ENCODE measurements at regions of chr5 and their contacts with region 1.

Region 1: GRCh38 chr5:139633295-139634027 is 14.7 kb upstream of the CXXC5 start:
- DNase-seq: peak; percentile 39 to 62
- ATAC-seq: peak; percentile 13 to 27
- H3K4me3 ChIP-seq: no peak overlapping the region
- H3K27ac ChIP-seq: no peak overlapping the region
- H3K4me1 ChIP-seq: peaks cover 19 to 30% of the 10 kb centered on the region in 2 donors
- H3K27me3 ChIP-seq: no peaks in the 10 kb centered on the region
- CTCF ChIP-seq: peak; percentile 95 to 99 (median 98)
- POLR2A ChIP-seq: no peak

Region 2: GRCh38 chr5:139417214-139417613 is 216.2 kb before region 1 on chr5:
- in situ Hi-C with region 1: no loop called
- intact Hi-C with region 1: loop called (anchors 5 kb)
- DNase-seq: peak; percentile 64 to 79
- ATAC-seq: peak; percentile 69 to 79
- H3K4me3 ChIP-seq: no peak overlapping the region
- H3K27ac ChIP-seq: peak overlapping the region; percentile 83 to 90 (median 87)
- H3K4me1 ChIP-seq: peaks cover 58 to 61% of the 10 kb centered on the region in 2 donors
- H3K27me3 ChIP-seq: no peaks in the 10 kb centered on the region
- CTCF ChIP-seq: no peak
- POLR2A ChIP-seq: no peak

Region 3: GRCh38 chr5:139651853-139652787 is 18.7 kb after region 1 on chr5:
- in situ Hi-C with region 1: no loop called
- intact Hi-C with region 1: loop called (anchors 1 kb)
- DNase-seq: peak; percentile 83 to 92
- ATAC-seq: peak; percentile 35 to 56
- H3K4me3 ChIP-seq: peak overlapping the region; percentile 27 to 77 (median 36)
- H3K27ac ChIP-seq: peak overlapping the region; percentile 97 to 99 (median 98)
- H3K4me1 ChIP-seq: peaks cover 69 to 70% of the 10 kb centered on the region in 2 donors
- H3K27me3 ChIP-seq: no peaks in the 10 kb centered on the region
- CTCF ChIP-seq: no peak
- POLR2A ChIP-seq: peak; percentile 53 to 87

Region 4: DNA sequence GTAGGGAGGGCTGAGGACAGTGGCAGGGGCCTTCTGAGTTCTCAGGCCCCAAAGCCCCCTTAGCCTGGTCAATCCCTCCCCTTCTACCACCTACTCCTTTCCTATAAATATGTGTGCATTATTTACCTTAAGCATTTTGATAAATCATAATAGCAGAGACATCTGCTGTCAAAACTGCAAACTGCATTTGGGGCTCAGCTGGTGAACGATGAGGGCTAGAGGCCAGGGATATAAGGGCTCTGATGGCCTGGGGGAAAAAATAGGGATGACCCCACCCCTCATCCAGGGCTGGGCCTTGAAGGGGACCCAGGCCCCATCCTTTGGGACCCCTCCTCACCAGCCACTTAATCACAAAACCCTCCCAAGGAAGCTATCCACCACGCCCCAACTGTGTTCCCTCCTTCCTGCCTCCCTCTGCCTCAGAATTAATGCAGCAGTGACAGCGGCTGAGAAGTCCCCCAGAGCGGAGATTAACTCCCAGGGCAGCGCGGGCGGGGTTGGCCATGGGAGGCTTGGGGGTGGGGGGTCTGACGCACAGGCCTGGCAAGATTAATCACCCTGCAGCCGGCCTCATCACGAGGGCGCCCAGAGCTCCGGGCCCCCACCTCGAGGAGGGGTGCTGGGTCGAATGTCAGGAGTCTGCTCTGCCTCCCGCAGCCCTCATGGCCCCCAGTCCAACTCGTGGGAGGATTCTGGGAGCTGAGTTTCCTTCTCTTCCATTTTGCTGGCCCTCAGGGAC is 56.8 kb after region 1 on chr5:
- in situ Hi-C with region 1: loop called (anchors 5 to 10 kb)
- intact Hi-C with region 1: loop called (anchors 1 kb)
- DNase-seq: no peak
- ATAC-seq: no peak
- H3K4me3 ChIP-seq: no peak overlapping the region
- H3K27ac ChIP-seq: peak overlapping the region; percentile 35 to 98 (median 80)
- H3K4me1 ChIP-seq: peaks cover 51 to 66% of the 10 kb centered on the region in 2 donors
- H3K27me3 ChIP-seq: no peaks in the 10 kb centered on the region
- CTCF ChIP-seq: peak; percentile 48 to 80 (median 71)
- POLR2A ChIP-seq: no peak

Region 5: GRCh38 chr5:139745800-139746690 is 112.6 kb after region 1 on chr5:
- in situ Hi-C with region 1: no loop called
- intact Hi-C with region 1: loop called (anchors 5 kb)
- DNase-seq: peak; percentile 60 to 79
- ATAC-seq: peak; percentile 92 to 94
- H3K4me3 ChIP-seq: peak overlapping the region; percentile 46 to 74 (median 60)
- H3K27ac ChIP-seq: peak overlapping the region; percentile 16 to 44 (median 30)
- H3K4me1 ChIP-seq: peaks cover 24 to 27% of the 10 kb centered on the region in 2 donors
- H3K27me3 ChIP-seq: peaks cover 22 to 23% (median 23%) of the 10 kb centered on the region in 3 donors
- CTCF ChIP-seq: no peak
- POLR2A ChIP-seq: no peak

Region 6: DNA sequence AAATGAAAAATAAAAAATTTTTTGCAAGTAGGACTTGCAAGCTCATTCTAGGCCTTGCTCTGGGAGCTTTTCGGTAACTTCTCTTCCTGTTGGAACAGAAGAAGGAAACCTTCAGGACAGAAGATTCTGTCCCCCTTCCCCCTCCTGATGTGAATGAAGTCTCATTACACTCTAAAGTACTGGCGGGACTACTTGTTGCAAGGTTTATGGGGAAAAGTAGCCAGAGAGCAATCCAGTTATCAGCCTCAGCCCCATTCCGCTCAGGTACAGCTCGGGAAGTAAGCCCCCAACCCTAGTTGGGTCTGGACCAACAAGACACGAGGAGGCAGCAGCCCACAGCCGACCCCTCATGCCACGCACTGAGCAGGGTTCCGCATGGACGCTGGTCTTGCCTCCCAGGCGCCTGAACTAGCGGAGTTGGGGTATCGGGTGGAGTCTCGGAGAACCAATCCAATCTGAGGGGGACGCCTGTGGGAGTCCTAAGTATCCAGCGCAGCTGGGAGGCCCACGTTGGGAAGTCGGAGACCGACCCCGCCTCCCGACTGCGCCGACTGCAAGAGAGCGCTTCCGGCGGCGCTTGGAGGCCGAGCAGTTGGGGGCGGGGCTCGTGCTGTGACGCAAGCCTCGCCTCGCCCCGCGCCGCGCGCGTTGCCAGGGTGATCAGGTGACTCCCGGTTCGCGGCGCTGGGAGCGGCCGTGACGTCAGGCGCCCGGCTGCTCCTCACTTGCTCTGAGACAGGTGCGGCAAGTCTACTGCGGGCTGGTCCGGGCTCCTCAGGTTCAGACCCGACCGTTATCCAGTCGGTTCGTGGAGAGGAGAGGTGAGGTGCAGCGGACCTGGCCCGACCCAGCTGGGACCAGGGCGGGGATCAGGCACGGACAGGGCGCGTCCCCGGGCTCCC is 541.3 kb after region 1 on chr5 and contains the start of gene CYSTM1:
- in situ Hi-C with region 1: no loop called
- intact Hi-C with region 1: loop called (anchors 10 kb)
- DNase-seq: peak; percentile 94 to 97
- ATAC-seq: peak; percentile 74 to 76
- H3K4me3 ChIP-seq: peak within 1 kb of the TSS; percentile 87 to 98 (median 88)
- H3K27ac ChIP-seq: peak within 1 kb of the TSS; percentile 97 to 99 (median 98)
- H3K4me1 ChIP-seq: peaks cover 35 to 37% of the 10 kb centered on the region in 2 donors
- H3K27me3 ChIP-seq: no peaks in the 10 kb centered on the region
- CTCF ChIP-seq: peak in 1 of 5 experiments; percentile 40
- POLR2A ChIP-seq: peak; percentile 98 to 99
- total RNA-seq, gene CYSTM1: 304 to 593 (median 336) TPM